CD4-positive, alpha-beta T cell (primary cell): ENCODE measurements at regions of chr12 and their contacts with region 1.

Region 1: GRCh38 chr12:68040450-68041075 is 51.3 kb downstream of the IFNG-AS1 start:
- DNase-seq: peak; percentile 35 to 84 (median 52)
- ATAC-seq: peak; percentile 90
- H3K4me3 ChIP-seq: no peak overlapping the region
- H3K4me3 Mint-ChIP-seq: no peak overlapping the region
- H3K27ac ChIP-seq: no peak overlapping the region
- H3K27ac Mint-ChIP-seq: no peak overlapping the region
- H3K4me1 ChIP-seq: peaks cover 4% of the 10 kb centered on the region
- H3K4me1 Mint-ChIP-seq: peaks cover 5% of the 10 kb centered on the region
- H3K27me3 ChIP-seq: no peaks in the 10 kb centered on the region
- H3K27me3 Mint-ChIP-seq: no peaks in the 10 kb centered on the region
- CTCF ChIP-seq: peak; percentile 97

Region 2: DNA sequence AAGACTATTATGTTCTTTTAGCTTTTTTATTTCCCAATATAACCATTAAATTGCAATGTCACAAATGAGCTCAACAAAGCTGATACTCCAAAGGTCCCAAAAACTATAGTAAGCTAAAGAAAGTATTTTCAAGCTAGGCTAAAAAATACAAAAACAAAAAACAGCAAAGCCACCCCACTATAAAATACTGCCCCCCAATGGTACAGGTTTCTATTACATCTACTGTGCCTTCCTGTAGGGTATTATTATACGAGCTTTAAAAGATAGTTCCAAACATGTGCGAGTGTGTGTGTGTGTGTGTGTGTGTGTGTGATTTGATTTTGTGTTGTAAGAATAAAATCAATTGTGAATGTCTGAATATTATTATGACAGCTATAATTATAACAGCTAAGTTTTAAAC is 117.9 kb after region 1 on chr12:
- CTCF ChIA-PET with region 1: interaction called, 5 read pairs
- POLR2A ChIA-PET with region 1: no interaction called
- intact Hi-C with region 1: loop called (anchors 1 to 5 kb)
- DNase-seq: peak in 4 of 14 experiments; percentile 7 to 76 (median 71)
- ATAC-seq: peak; percentile 73
- H3K4me3 ChIP-seq: peak overlapping the region; percentile 38
- H3K4me3 Mint-ChIP-seq: peak overlapping the region; percentile 20
- H3K27ac ChIP-seq: no peak overlapping the region
- H3K27ac Mint-ChIP-seq: no peak overlapping the region
- H3K4me1 ChIP-seq: peaks cover 6% of the 10 kb centered on the region
- H3K4me1 Mint-ChIP-seq: peaks cover 18% of the 10 kb centered on the region
- H3K27me3 ChIP-seq: no peaks in the 10 kb centered on the region
- H3K27me3 Mint-ChIP-seq: no peaks in the 10 kb centered on the region
- CTCF ChIP-seq: peak; percentile 54

Region 3: GRCh38 chr12:68317047-68317667 is 276.6 kb after region 1 on chr12:
- CTCF ChIA-PET with region 1: interaction called, 11 read pairs
- POLR2A ChIA-PET with region 1: no interaction called
- intact Hi-C with region 1: loop called (anchors 1 kb)
- DNase-seq: peak in 10 of 14 experiments; percentile 16 to 79 (median 24)
- ATAC-seq: no peak
- H3K4me3 ChIP-seq: no peak overlapping the region
- H3K4me3 Mint-ChIP-seq: no peak overlapping the region
- H3K27ac ChIP-seq: no peak overlapping the region
- H3K27ac Mint-ChIP-seq: no peak overlapping the region
- H3K4me1 ChIP-seq: no peaks in the 10 kb centered on the region
- H3K4me1 Mint-ChIP-seq: no peaks in the 10 kb centered on the region
- H3K27me3 ChIP-seq: no peaks in the 10 kb centered on the region
- H3K27me3 Mint-ChIP-seq: no peaks in the 10 kb centered on the region
- CTCF ChIP-seq: peak; percentile 86

Region 4: DNA sequence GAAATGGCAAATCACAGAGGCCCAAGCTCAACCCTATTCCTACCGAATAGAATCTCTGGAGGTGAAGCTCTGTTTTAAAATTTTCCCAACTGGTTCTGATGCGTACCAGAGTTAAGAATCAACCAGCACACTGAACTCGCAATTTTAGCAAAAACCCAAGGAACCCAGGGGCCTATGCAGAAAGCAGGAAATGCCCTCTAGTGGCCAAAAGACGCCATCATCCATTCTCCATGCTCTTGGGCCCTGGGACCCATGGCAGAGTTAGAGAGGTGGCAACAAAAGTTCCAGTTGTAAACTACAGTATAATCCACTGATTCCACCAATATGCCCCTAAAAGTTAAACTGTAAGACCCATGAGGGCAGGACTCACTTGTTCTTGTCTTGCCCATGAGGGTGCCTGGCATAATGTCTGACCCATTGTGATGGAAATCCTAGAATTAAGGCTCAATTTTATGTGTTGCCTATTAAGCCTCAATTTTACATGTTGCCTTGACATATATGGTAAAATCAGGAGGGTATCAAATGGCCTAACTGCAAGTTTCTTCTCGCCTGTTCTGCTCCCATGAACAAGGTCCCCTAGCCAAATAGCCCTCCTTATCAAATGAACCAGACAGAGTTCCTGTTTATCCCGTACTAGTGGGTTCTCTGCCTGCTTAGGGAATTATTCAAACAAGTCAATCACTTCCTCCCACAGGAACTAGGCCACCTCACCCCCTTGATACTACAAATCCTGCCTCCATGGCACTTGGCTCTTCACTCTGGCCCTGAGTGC is 1029.9 kb after region 1 on chr12:
- CTCF ChIA-PET with region 1: no interaction called
- POLR2A ChIA-PET with region 1: no interaction called
- intact Hi-C with region 1: loop called in 1 of 2 experiments (anchors 10 kb)
- DNase-seq: peak; percentile 23 to 74 (median 44)
- ATAC-seq: peak; percentile 71
- H3K4me3 ChIP-seq: no peak overlapping the region
- H3K4me3 Mint-ChIP-seq: no peak overlapping the region
- H3K27ac ChIP-seq: no peak overlapping the region
- H3K27ac Mint-ChIP-seq: no peak overlapping the region
- H3K4me1 ChIP-seq: no peaks in the 10 kb centered on the region
- H3K4me1 Mint-ChIP-seq: no peaks in the 10 kb centered on the region
- H3K27me3 ChIP-seq: peaks cover 0 to 4% of the 10 kb centered on the region in 2 experiments
- H3K27me3 Mint-ChIP-seq: peaks cover 20% of the 10 kb centered on the region
- CTCF ChIP-seq: peak; percentile 85

Region 5: DNA sequence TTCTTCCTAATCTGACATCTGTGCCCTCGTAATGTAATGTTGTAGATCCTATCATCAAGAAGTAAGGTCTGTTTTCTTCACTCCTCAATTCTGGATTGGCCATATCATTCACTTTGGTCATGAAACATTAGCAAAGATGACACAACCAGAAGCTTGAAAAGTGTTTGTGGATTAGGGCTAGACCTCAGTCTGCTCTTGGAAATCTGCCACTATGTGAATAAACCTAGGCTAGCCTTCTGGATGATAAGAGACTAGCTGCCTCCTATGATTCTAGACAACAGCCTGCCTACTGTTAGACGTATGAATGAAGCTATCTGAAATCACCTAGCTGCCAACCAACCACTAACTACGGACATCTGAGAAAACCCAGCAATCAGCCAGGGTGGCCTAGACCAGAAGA is 1268.9 kb after region 1 on chr12:
- CTCF ChIA-PET with region 1: no interaction called
- POLR2A ChIA-PET with region 1: no interaction called
- intact Hi-C with region 1: no loop called
- DNase-seq: no peak
- ATAC-seq: no peak
- H3K4me3 ChIP-seq: no peak overlapping the region
- H3K4me3 Mint-ChIP-seq: no peak overlapping the region
- H3K27ac ChIP-seq: no peak overlapping the region
- H3K27ac Mint-ChIP-seq: no peak overlapping the region
- H3K4me1 ChIP-seq: no peaks in the 10 kb centered on the region
- H3K4me1 Mint-ChIP-seq: no peaks in the 10 kb centered on the region
- H3K27me3 ChIP-seq: peaks cover 0 to 3% of the 10 kb centered on the region in 2 experiments
- H3K27me3 Mint-ChIP-seq: no peaks in the 10 kb centered on the region
- CTCF ChIP-seq: no peak

Region 6: DNA sequence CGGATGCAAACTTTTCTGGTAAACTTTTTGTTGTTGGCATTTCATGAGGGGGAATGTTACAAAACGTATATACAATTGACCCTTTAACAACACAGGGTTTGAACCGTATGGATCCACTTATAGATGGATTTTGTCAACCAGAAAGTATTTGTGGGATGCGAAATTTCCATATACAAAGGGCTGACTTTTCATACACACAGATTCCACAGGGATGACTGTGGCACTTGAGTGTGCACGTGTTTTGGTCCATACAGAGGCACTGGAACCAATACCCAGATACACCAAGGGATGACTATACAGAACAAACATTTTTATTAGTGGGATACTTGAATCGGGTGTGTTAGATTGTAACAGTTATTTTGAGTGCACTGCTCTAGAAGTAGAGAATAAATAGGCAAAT is 1514.9 kb after region 1 on chr12:
- CTCF ChIA-PET with region 1: no interaction called
- POLR2A ChIA-PET with region 1: no interaction called
- intact Hi-C with region 1: no loop called
- DNase-seq: no peak
- ATAC-seq: no peak
- H3K4me3 ChIP-seq: no peak overlapping the region
- H3K4me3 Mint-ChIP-seq: no peak overlapping the region
- H3K27ac ChIP-seq: no peak overlapping the region
- H3K27ac Mint-ChIP-seq: no peak overlapping the region
- H3K4me1 ChIP-seq: no peaks in the 10 kb centered on the region
- H3K4me1 Mint-ChIP-seq: no peaks in the 10 kb centered on the region
- H3K27me3 ChIP-seq: no peaks in the 10 kb centered on the region
- H3K27me3 Mint-ChIP-seq: no peaks in the 10 kb centered on the region
- CTCF ChIP-seq: no peak